PC-9 (cell line): ENCODE measurements at regions of chr14 and their contacts with region 1.

Region 1: GRCh38 chr14:64758691-64759584 is 54.7 kb downstream of the PLEKHG3 start:
- DNase-seq: peak; percentile 77 to 85
- H3K4me3 ChIP-seq: no peak overlapping the region
- H3K27ac ChIP-seq: peak overlapping the region; percentile 34
- H3K4me1 ChIP-seq: peaks cover 79% of the 10 kb centered on the region
- H3K27me3 ChIP-seq: no peaks in the 10 kb centered on the region
- CTCF ChIP-seq: no peak

Region 2: DNA sequence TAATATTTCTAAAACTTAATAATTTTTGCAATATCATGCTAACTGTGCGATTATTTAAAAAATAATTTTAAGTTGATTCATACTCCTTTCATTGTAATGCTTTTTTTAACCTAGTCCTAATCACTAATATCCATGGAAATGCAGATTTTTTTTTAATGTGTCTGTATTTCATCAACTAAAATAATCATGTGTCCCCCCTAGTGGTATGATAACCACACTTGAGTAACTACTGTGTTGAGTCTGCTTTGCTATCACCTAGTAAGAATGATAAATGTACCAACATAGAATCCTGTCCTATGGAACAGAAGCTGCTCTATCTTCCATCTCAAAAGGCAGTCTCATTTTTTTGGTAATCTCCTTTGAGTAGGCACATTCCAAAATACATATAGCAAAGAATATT is 925.2 kb before region 1 on chr14:
- CTCF ChIA-PET with region 1: no interaction called
- POLR2A ChIA-PET with region 1: no interaction called
- intact Hi-C with region 1: no loop called
- DNase-seq: no peak
- H3K4me3 ChIP-seq: no peak overlapping the region
- H3K27ac ChIP-seq: no peak overlapping the region
- H3K4me1 ChIP-seq: no peaks in the 10 kb centered on the region
- H3K27me3 ChIP-seq: no peaks in the 10 kb centered on the region
- CTCF ChIP-seq: no peak

Region 3: GRCh38 chr14:64704143-64704742 is 54.7 kb before region 1 on chr14 and contains the start of gene PLEKHG3:
- CTCF ChIA-PET with region 1: interaction called, 6 read pairs
- POLR2A ChIA-PET with region 1: interaction called, 3 read pairs
- intact Hi-C with region 1: loop called (anchors 1 kb)
- DNase-seq: peak; percentile 70 to 88
- H3K4me3 ChIP-seq: peak within 1 kb of the TSS; percentile 97
- H3K27ac ChIP-seq: peak within 1 kb of the TSS; percentile 49
- H3K4me1 ChIP-seq: peaks cover 69% of the 10 kb centered on the region
- H3K27me3 ChIP-seq: no peaks in the 10 kb centered on the region
- CTCF ChIP-seq: no peak
- total RNA-seq, gene PLEKHG3: 59.3 and 61.7 TPM in 2 replicates

Region 4: GRCh38 chr14:64720131-64720576 is 38.8 kb before region 1 on chr14:
- CTCF ChIA-PET with region 1: no interaction called
- POLR2A ChIA-PET with region 1: no interaction called
- intact Hi-C with region 1: loop called (anchors 2 kb)
- DNase-seq: peak; percentile 78 to 99
- H3K4me3 ChIP-seq: peak overlapping the region; percentile 11; the same call in 1 of the 2 replicates
- H3K27ac ChIP-seq: peak overlapping the region; percentile 88
- H3K4me1 ChIP-seq: peaks cover 97% of the 10 kb centered on the region
- H3K27me3 ChIP-seq: no peaks in the 10 kb centered on the region
- CTCF ChIP-seq: no peak

Region 5: DNA sequence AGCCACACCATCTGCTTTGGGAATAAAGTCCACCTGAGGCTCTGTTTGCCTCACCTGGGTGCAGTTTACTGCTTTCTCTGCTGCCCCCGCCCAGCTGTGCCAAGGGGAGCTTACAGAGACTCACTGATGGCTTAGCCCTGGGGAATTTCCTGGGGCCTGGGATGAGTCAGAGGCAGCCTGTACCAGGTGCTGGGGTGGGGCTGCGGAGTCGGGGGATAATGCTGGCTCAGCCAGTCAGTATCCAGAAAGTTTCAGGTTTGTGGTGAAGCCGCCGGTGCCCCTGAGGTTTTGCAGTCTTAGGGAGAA is 32.4 kb before region 1 on chr14:
- CTCF ChIA-PET with region 1: no interaction called
- POLR2A ChIA-PET with region 1: no interaction called
- intact Hi-C with region 1: loop called (anchors 1 kb)
- DNase-seq: peak; percentile 91 to 92
- H3K4me3 ChIP-seq: no peak overlapping the region
- H3K27ac ChIP-seq: peak overlapping the region; percentile 53
- H3K4me1 ChIP-seq: peaks cover 56% of the 10 kb centered on the region
- H3K27me3 ChIP-seq: no peaks in the 10 kb centered on the region
- CTCF ChIP-seq: no peak

Region 6: GRCh38 chr14:64971943-64972791 is 213.2 kb after region 1 on chr14 and contains the start of gene RAB15:
- CTCF ChIA-PET with region 1: no interaction called
- POLR2A ChIA-PET with region 1: no interaction called
- intact Hi-C with region 1: loop called (anchors 5 kb)
- DNase-seq: peak in 1 of 2 experiments; percentile 42
- H3K4me3 ChIP-seq: peak within 1 kb of the TSS; percentile 83
- H3K27ac ChIP-seq: peak within 1 kb of the TSS; percentile 79
- H3K4me1 ChIP-seq: peaks cover 45% of the 10 kb centered on the region
- H3K27me3 ChIP-seq: no peaks in the 10 kb centered on the region
- CTCF ChIP-seq: no peak
- total RNA-seq, gene RAB15: 52.9 and 74.9 TPM in 2 replicates